ENCODE measurements at regions of chr12 and their contacts with region 1.

Region 1: GRCh38 chr12:111170543-111170942 is 198.4 kb downstream of the PHETA1 start:
- DNase-seq: no peak
- ATAC-seq: no peak
- H3K4me3 Mint-ChIP-seq: no peak overlapping the region
- H3K27ac Mint-ChIP-seq: no peak overlapping the region
- H3K4me1 Mint-ChIP-seq: 0 out of 2 replicates have a peak, but pooled peaks cover 3% of the 10 kb centered on the region
- H3K27me3 Mint-ChIP-seq: no peaks in the 10 kb centered on the region
- CTCF ChIP-seq: no peak

Region 2: DNA sequence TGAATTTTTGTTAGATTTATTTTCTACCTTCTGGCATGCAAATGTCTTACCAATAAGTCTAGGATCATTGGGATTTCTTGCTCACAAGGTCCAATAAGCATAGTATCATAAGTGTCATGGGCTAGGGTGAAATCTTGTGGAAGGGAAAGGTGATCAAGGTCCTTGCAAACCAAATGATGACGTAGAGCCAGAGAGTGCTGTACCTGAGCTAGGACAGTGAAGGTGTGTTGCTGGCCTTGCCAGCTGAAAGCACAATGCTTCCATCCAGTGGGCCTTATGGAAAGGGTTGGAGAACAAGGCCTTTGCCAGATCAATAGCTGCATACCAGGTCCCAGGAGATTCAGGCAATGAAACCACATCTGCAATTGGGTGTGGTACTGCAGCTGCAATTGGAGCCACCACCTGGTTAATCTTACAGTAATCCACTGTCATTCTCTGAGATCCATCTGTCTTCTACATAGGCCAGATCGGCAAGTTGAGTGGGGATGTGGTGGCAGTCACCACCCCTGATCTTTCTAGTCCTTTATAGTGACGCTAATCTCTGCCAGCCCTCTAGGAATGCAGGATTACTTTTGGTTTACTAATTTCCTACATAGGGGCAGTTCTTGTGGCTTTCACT is 41.3 kb before region 1 on chr12:
- CTCF ChIA-PET with region 1: no interaction called
- POLR2A ChIA-PET with region 1: interaction called, 10 read pairs
- DNase-seq: no peak
- ATAC-seq: no peak
- H3K4me3 Mint-ChIP-seq: no peak overlapping the region
- H3K27ac Mint-ChIP-seq: no peak overlapping the region
- H3K4me1 Mint-ChIP-seq: no peaks in the 10 kb centered on the region
- H3K27me3 Mint-ChIP-seq: peaks cover 6% of the 10 kb centered on the region
- CTCF ChIP-seq: no peak

Measured in WTC11 (cell line).